ENCODE measurements at regions of chr7 and their contacts with region 1.

Region 1: GRCh38 chr7:44638611-44639557 is 32.5 kb downstream of the OGDH start:
- DNase-seq: peak; percentile 92
- H3K4me3 Mint-ChIP-seq: peak overlapping the region; percentile 54
- H3K27ac Mint-ChIP-seq: peak overlapping the region; percentile 97
- H3K4me1 Mint-ChIP-seq: peaks cover 64% of the 10 kb centered on the region
- H3K27me3 Mint-ChIP-seq: no peaks in the 10 kb centered on the region

Region 2: GRCh38 chr7:44490351-44491200 is 148.3 kb before region 1 on chr7 and contains the start of gene NUDCD3:
- CTCF ChIA-PET with region 1: no interaction called
- intact Hi-C with region 1: loop called (anchors 2 kb)
- DNase-seq: peak; percentile 89
- H3K4me3 Mint-ChIP-seq: peak within 1 kb of the TSS; percentile 85
- H3K27ac Mint-ChIP-seq: peak within 1 kb of the TSS; percentile 94
- H3K4me1 Mint-ChIP-seq: peaks cover 41% of the 10 kb centered on the region
- H3K27me3 Mint-ChIP-seq: no peaks in the 10 kb centered on the region
- total RNA-seq, gene NUDCD3: 81.1 to 81.8 TPM

Region 3: GRCh38 chr7:44606450-44607254 is 32.2 kb before region 1 on chr7 and contains the start of gene OGDH:
- CTCF ChIA-PET with region 1: interaction called, 17 read pairs
- intact Hi-C with region 1: loop called (anchors 1 kb)
- DNase-seq: peak; percentile 100
- H3K4me3 Mint-ChIP-seq: peak within 1 kb of the TSS; percentile 96
- H3K27ac Mint-ChIP-seq: peak within 1 kb of the TSS; percentile 97
- H3K4me1 Mint-ChIP-seq: peaks cover 31% of the 10 kb centered on the region
- H3K27me3 Mint-ChIP-seq: no peaks in the 10 kb centered on the region
- total RNA-seq, gene OGDH: 73.9 to 78.4 TPM

Region 4: GRCh38 chr7:44693721-44694285 is 54.9 kb after region 1 on chr7:
- CTCF ChIA-PET with region 1: interaction called, 4 read pairs
- intact Hi-C with region 1: loop called (anchors 5 kb)
- DNase-seq: no peak
- H3K4me3 Mint-ChIP-seq: no peak overlapping the region
- H3K27ac Mint-ChIP-seq: no peak overlapping the region
- H3K4me1 Mint-ChIP-seq: peaks cover 7% of the 10 kb centered on the region
- H3K27me3 Mint-ChIP-seq: no peaks in the 10 kb centered on the region

Region 5: GRCh38 chr7:44797329-44798251 is 158.7 kb after region 1 on chr7:
- CTCF ChIA-PET with region 1: interaction called, 3 read pairs
- intact Hi-C with region 1: loop called (anchors 1 kb)
- DNase-seq: peak; percentile 89
- H3K4me3 Mint-ChIP-seq: peak overlapping the region; percentile 98
- H3K27ac Mint-ChIP-seq: peak overlapping the region; percentile 98
- H3K4me1 Mint-ChIP-seq: peaks cover 30% of the 10 kb centered on the region
- H3K27me3 Mint-ChIP-seq: no peaks in the 10 kb centered on the region

Region 6: DNA sequence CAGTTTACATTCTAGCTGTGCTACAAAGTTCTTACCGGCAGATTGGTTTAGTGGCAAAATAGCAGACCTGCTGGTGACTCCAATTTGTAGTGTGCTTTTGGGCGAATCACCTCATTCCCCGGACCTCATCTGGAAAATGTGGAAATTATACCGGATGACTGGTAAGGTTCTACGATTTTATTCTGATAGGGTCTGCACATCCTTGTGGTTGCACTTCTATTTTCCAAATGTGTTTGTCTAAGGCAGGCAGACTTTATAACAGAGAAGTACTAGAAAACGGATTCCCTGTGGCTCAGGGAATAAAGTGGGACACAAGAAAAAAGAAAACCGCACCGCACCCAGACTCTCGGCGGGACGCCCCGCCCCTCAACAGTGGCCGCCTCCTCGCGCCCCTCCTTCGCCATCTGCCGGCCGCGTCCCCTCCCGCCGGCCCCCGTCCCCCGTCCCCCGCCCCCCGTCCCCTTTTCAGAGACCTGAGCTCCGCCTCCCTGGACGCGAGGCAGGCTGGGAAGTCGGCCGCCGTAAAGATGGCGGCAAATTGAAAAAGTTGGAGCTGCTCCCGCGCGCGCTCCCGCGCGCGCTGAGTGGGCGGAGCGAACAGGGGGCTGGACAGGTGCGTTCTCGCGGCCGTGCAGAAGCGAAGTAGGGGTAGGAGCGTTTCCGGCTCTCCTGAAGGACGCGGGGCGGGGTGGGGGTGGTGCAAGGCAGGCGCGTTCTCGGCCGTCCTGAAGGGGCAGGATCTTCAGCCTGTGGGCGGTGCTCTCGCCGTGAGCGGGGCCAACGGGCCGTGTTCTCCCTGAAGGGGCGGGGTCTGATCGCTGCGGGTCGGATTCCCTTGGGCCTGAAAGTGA is 360.6 kb after region 1 on chr7:
- CTCF ChIA-PET with region 1: no interaction called
- intact Hi-C with region 1: loop called (anchors 1 kb)
- DNase-seq: peak; percentile 100
- H3K4me3 Mint-ChIP-seq: peak overlapping the region; percentile 88
- H3K27ac Mint-ChIP-seq: peak overlapping the region; percentile 94
- H3K4me1 Mint-ChIP-seq: peaks cover 56% of the 10 kb centered on the region
- H3K27me3 Mint-ChIP-seq: no peaks in the 10 kb centered on the region

Measured in activated naive CD4-positive, alpha-beta T cell treated with anti-CD3 and anti-CD28 coated beads for 36 hours (primary cell).